K562 (cell line): ENCODE measurements at regions of chr17 and their contacts with region 1.

Region 1: GRCh38 chr17:73420895-73421294 is 109.1 kb upstream of the CDC42EP4 start:
- DNase-seq: peak; percentile 29 to 42 (median 33)
- ATAC-seq: peak; percentile 87
- H3K4me3 ChIP-seq: no peak overlapping the region
- H3K27ac ChIP-seq: no peak overlapping the region
- H3K4me1 ChIP-seq: no peaks in the 10 kb centered on the region
- H3K27me3 ChIP-seq: peaks cover 28 to 65% of the 10 kb centered on the region in 2 experiments
- CTCF ChIP-seq: peak; percentile 32 to 44 (median 36); a peak in 4 of 6 replicates
- EP300 ChIP-seq: no peak
- POLR2A ChIP-seq: no peak
- RAD21 ChIP-seq: peak in 1 of 2 experiments; percentile 37; a peak in 1 of 4 replicates

Region 2: DNA sequence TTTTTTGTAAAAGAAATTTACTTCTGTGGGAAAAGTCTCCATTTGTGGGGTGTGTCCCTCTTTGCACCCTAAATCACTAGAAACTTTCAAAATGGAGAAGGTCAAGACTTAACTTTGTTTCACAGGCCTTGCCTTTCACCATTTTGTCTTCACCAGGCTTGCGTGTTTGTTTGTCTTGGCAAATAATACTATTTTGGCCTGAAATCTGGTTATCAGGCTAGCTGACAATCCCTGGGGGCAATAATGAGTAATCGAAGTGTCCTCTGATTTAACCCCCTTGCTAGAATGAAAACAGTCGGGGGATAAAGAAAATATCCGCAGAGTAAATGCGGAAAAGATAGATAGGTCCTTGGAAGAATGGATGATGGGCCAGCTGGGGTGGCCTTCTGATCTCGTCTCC is 362.9 kb before region 1 on chr17:
- CTCF ChIA-PET with region 1: no interaction called
- POLR2A ChIA-PET with region 1: no interaction called
- in situ Hi-C with region 1: no loop called
- intact Hi-C with region 1: no loop called
- DNase-seq: no peak
- ATAC-seq: no peak
- H3K4me3 ChIP-seq: no peak overlapping the region
- H3K27ac ChIP-seq: no peak overlapping the region
- H3K4me1 ChIP-seq: no peaks in the 10 kb centered on the region; a peak in 1 of 5 replicates
- H3K27me3 ChIP-seq: no peaks in the 10 kb centered on the region
- CTCF ChIP-seq: no peak
- EP300 ChIP-seq: no peak
- POLR2A ChIP-seq: no peak
- RAD21 ChIP-seq: no peak

Region 3: DNA sequence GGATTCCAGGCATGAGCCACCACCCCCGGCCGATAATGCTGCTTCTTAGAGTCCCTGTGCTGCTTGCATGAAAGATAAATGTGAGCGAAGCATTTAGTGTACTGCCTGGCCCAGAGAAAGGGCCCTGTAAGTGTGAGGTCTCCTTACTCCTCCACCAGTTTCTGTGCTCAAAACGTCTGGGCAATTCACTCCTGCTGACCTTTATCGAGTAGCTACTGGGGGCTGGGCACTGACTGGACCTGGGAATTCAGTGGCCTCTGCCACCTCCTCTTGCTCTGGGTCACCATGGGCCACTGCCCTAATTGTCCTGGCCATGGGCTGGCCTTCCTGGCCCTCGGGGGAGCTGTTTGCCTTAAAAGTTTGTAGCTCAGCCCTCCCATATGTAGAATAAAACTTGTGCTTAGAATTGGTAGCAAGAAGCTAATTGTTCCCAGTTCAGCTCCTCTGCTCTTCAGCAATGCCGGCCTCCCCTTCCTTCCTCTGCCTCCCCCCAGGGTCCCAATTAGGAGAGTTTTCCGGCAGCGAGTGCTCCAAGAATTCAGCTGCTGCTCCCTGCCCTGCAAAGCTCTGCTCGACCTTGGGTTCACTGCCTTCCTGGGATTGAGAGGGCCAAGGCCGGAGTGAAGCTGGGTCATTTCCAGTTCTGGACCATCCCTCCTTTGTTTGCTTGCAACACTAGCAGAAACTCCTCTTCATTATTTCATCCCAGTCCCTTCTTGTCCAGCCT is 10.1 kb before region 1 on chr17:
- CTCF ChIA-PET with region 1: no interaction called
- POLR2A ChIA-PET with region 1: interaction called, 14 read pairs
- in situ Hi-C with region 1: no loop called
- intact Hi-C with region 1: no loop called
- DNase-seq: no peak
- ATAC-seq: no peak
- H3K4me3 ChIP-seq: no peak overlapping the region
- H3K27ac ChIP-seq: no peak overlapping the region
- H3K4me1 ChIP-seq: no peaks in the 10 kb centered on the region; a peak in 1 of 5 replicates
- H3K27me3 ChIP-seq: peaks cover 17 to 41% of the 10 kb centered on the region in 2 experiments; a peak in 4 of 5 replicates
- CTCF ChIP-seq: no peak
- EP300 ChIP-seq: no peak
- POLR2A ChIP-seq: no peak
- RAD21 ChIP-seq: no peak

Region 4: DNA sequence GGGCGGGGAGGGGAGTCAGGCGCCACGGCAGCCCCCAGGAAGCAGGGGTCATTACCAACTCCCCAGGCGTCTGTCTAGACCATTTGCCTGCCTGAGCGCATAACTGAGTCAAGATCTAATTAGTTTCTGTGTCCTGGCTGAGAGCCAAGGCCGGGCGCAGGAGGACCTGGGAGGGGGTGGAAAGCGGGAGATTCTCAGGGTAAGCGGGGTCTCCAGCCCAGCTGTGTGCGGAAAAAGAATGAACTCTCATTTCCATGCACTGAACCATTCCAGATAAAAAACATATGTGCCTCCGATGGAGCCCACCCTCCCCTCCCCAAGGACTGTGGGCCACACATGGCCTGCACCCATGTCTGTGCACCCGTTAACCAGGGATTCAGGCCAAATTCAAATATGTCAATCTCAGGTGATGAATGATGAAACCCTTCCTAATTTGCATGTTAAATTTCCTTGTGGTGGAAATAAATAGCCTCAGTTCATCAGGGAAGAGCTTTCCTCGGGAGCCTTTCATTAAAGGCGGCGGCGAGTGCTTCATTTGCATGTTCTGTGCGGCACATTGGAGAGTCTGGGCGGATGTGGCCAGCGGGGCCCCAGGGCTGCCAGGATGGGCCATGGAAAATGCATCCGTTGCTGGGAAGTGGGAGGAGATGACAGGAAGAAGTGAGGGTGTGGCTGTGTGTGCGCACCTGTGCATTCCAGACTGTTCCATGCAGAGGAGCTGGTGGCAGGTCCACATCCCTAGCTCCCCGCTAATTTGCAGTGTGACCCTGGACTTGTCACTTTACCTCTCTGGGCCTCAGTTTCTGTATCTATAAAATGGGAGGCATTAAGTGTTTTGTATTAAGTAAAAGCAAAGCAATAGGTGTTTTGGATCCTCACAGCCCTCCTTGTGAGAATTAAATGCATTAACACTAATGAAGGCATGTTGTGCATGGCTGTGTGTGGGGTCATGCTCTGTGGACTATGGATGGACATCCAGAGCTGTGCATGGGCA is 72.2 kb after region 1 on chr17:
- CTCF ChIA-PET with region 1: no interaction called
- POLR2A ChIA-PET with region 1: no interaction called
- in situ Hi-C with region 1: no loop called
- intact Hi-C with region 1: no loop called
- DNase-seq: no peak
- ATAC-seq: no peak
- H3K4me3 ChIP-seq: no peak overlapping the region
- H3K27ac ChIP-seq: no peak overlapping the region
- H3K4me1 ChIP-seq: no peaks in the 10 kb centered on the region
- H3K27me3 ChIP-seq: peaks cover 11 to 67% of the 10 kb centered on the region in 2 experiments; a peak in 3 of 5 replicates
- CTCF ChIP-seq: no peak
- EP300 ChIP-seq: no peak
- POLR2A ChIP-seq: no peak
- RAD21 ChIP-seq: no peak